HepG2 (cell line): ENCODE measurements at regions of chr5 and their contacts with region 1.

Region 1: GRCh38 chr5:103258368-103258956 is at the start of gene MACIR:
- DNase-seq: peak; percentile 69
- ATAC-seq: peak; percentile 89
- H3K4me3 ChIP-seq: peak within 1 kb of the TSS; percentile 74 to 81 (median 77)
- H3K27ac ChIP-seq: peak within 1 kb of the TSS; percentile 66
- H3K4me1 ChIP-seq: peaks cover 37% of the 10 kb centered on the region
- H3K27me3 ChIP-seq: peaks cover 0 to 3% of the 10 kb centered on the region in 2 experiments; a peak in 1 of 5 replicates
- CTCF ChIP-seq: no peak
- EP300 ChIP-seq: no peak
- POLR2A ChIP-seq: peak; percentile 33 to 74; a peak in 3 of 4 replicates
- RAD21 ChIP-seq: no peak
- total RNA-seq, gene MACIR: 4.4 and 5.5 TPM in 2 replicates

Region 2: DNA sequence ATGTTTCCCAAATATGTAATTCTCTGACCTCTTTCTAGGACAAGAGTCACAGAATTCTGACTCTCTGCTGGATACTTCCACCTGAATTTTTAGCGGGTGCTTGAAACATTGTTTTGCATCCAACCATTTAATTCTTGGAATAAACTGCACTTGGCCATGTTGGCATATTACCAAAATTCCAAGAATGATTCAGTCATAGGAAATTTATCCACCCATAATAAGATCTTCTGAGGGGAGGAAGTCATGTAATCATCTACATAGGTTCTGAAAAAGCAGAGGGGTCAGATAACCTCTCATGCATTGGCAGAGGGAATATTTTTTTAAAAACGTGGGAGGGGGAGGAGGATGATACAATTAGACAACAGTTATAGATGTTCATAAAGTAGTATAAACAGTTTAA is 346.5 kb before region 1 on chr5:
- CTCF ChIA-PET with region 1: no interaction called
- POLR2A ChIA-PET with region 1: no interaction called
- in situ Hi-C with region 1: no loop called
- intact Hi-C with region 1: no loop called
- DNase-seq: no peak
- ATAC-seq: no peak
- H3K4me3 ChIP-seq: no peak overlapping the region
- H3K27ac ChIP-seq: no peak overlapping the region
- H3K4me1 ChIP-seq: no peaks in the 10 kb centered on the region
- H3K27me3 ChIP-seq: no peaks in the 10 kb centered on the region
- CTCF ChIP-seq: no peak
- EP300 ChIP-seq: no peak
- POLR2A ChIP-seq: no peak
- RAD21 ChIP-seq: no peak

Region 3: GRCh38 chr5:102922799-102923477 is 335.5 kb before region 1 on chr5:
- CTCF ChIA-PET with region 1: no interaction called
- POLR2A ChIA-PET with region 1: no interaction called
- in situ Hi-C with region 1: no loop called
- intact Hi-C with region 1: no loop called
- DNase-seq: no peak
- ATAC-seq: no peak
- H3K4me3 ChIP-seq: no peak overlapping the region
- H3K27ac ChIP-seq: no peak overlapping the region
- H3K4me1 ChIP-seq: no peaks in the 10 kb centered on the region
- H3K27me3 ChIP-seq: no peaks in the 10 kb centered on the region
- CTCF ChIP-seq: no peak
- EP300 ChIP-seq: no peak
- POLR2A ChIP-seq: no peak
- RAD21 ChIP-seq: no peak

Region 4: DNA sequence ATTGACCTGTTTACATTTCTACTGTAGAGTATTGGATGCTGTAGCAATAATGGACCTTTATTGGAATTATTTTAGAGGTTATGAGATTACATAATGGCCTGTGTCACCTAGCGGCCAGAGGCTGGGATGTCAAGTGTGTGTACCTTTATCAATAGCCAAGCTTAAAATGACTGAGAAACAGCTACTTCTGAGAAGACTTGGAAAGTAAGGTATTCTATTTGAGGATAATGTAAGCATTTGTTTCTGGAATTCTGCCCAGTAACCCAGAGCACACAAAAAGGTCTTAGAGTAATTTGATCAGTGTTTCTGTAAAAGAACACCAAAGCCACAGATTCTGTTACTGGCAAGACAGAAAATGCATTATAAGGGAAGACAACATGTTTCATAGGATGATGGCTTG is 116.9 kb after region 1 on chr5:
- CTCF ChIA-PET with region 1: no interaction called
- POLR2A ChIA-PET with region 1: no interaction called
- in situ Hi-C with region 1: no loop called
- intact Hi-C with region 1: loop called (anchors 10 kb)
- DNase-seq: no peak
- ATAC-seq: peak; percentile 63
- H3K4me3 ChIP-seq: no peak overlapping the region
- H3K27ac ChIP-seq: no peak overlapping the region
- H3K4me1 ChIP-seq: peaks cover 18% of the 10 kb centered on the region
- H3K27me3 ChIP-seq: no peaks in the 10 kb centered on the region
- CTCF ChIP-seq: no peak
- EP300 ChIP-seq: no peak
- POLR2A ChIP-seq: no peak
- RAD21 ChIP-seq: no peak

Region 5: DNA sequence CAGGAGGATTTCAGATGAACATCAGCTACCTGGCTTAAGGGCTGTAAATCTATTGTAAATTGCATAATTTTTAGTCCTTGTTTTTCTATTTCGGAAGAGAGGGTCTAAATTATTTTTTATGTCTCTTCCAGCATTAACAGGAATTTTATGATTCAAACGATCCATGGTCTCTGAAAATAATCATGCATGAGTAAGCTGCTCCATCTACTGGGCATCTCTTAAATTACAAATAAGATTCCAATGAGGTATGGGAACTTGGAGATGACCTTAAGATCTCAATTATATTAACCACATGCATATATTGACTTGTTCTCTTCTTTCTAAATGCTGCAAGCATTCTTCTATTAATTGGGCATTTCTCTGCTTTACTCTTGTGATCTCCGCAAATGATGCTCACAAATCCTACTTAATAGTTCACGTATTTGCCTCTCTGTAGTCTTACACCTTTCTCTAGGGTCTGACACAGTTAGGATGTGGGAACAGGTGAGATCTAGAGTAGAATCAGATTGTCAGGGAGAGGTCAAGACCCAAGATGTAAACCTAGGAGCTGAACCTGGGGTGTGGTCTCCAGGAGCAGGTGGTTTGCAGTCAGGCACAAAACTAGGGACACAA is 217.3 kb after region 1 on chr5:
- CTCF ChIA-PET with region 1: interaction called, 3 read pairs
- POLR2A ChIA-PET with region 1: no interaction called
- in situ Hi-C with region 1: no loop called
- intact Hi-C with region 1: loop called (anchors 1 kb)
- DNase-seq: peak; percentile 21
- ATAC-seq: peak; percentile 57
- H3K4me3 ChIP-seq: no peak overlapping the region
- H3K27ac ChIP-seq: no peak overlapping the region
- H3K4me1 ChIP-seq: no peaks in the 10 kb centered on the region
- H3K27me3 ChIP-seq: no peaks in the 10 kb centered on the region
- CTCF ChIP-seq: peak; percentile 68
- EP300 ChIP-seq: no peak
- POLR2A ChIP-seq: no peak
- RAD21 ChIP-seq: no peak; the same call in 1 of the 2 replicates